MCF 10A (cell line): ENCODE measurements at regions of chr3 and their contacts with region 1.

Region 1: DNA sequence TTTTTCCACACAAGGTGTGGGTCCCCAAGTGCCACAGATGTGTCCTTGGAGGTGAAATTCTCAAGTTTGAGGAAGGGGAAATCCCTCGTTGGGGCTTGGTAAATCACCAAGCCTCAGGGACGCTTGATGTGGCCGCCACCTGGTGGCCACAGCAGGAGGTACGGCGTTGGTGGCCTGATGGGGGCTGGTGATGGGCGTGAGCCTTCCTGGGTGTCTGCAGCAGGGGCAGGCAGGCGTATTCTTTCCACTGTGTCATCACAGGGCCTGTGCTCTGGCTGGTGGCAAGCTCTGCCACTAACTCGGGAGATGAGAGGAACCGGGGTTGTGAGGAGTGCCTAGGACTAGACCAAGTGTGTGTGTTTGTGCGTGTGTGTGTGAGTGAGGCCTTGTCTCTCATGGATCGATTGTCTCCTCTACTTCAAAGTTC is 4.2 kb downstream of the ACOX2 start:
- DNase-seq: peak; percentile 79
- H3K4me3 Mint-ChIP-seq: no peak overlapping the region
- H3K27ac Mint-ChIP-seq: no peak overlapping the region
- H3K4me1 Mint-ChIP-seq: peaks cover 27% of the 10 kb centered on the region
- H3K27me3 Mint-ChIP-seq: no peaks in the 10 kb centered on the region
- CTCF ChIP-seq: peak; percentile 95

Region 2: DNA sequence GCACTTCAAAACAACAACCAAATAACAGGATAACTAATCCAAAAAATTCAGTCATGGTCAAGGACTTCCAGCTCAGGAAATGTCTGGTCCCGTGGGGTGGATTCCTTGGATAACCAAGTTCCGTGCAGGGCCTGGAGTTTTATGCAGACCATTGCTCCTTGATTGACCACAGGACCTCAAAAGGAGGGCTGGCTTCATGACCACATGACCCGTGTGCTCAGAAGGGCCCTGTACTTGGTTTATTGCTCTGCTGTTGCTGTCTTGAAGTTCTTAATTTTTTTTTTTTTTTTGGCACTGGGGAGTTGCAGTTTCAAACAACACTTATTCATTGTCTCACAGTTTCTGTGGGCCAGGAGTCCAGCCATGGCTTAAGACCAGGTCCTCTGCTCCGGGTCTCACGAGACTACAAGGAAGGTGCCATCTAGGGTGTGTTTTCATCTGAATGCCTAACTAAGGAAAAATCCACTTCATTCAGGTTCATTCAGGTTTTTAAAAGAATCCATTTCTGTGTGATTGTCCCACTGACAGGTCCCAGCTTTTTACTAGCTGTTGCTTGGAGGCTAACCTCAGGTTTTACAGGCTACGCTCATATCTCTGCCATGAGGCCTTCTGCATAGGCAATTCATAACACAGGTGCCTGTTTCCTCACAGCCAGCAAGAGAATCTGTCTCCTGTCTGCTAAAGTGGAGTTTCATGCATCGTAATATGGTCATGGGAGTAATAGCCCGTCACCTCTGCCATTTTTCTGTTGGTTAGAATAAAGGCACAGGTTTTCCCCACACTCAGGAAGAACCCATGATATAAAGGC is 459.3 kb before region 1 on chr3:
- CTCF ChIA-PET with region 1: no interaction called
- POLR2A ChIA-PET with region 1: no interaction called
- intact Hi-C with region 1: no loop called
- DNase-seq: no peak
- H3K4me3 Mint-ChIP-seq: no peak overlapping the region
- H3K27ac Mint-ChIP-seq: peak overlapping the region; percentile 54
- H3K4me1 Mint-ChIP-seq: peaks cover 19% of the 10 kb centered on the region
- H3K27me3 Mint-ChIP-seq: no peaks in the 10 kb centered on the region
- CTCF ChIP-seq: no peak

Region 3: GRCh38 chr3:58324391-58325390 is 208.1 kb before region 1 on chr3:
- CTCF ChIA-PET with region 1: interaction called, 6 read pairs
- POLR2A ChIA-PET with region 1: no interaction called
- intact Hi-C with region 1: loop called (anchors 1 kb)
- DNase-seq: no peak
- H3K4me3 Mint-ChIP-seq: no peak overlapping the region
- H3K27ac Mint-ChIP-seq: no peak overlapping the region
- H3K4me1 Mint-ChIP-seq: no peaks in the 10 kb centered on the region
- H3K27me3 Mint-ChIP-seq: no peaks in the 10 kb centered on the region
- CTCF ChIP-seq: no peak

Region 4: GRCh38 chr3:58433400-58434169 is 99.2 kb before region 1 on chr3 and contains the start of gene PDHB:
- CTCF ChIA-PET with region 1: interaction called, 3 read pairs
- POLR2A ChIA-PET with region 1: interaction called, 4 read pairs
- intact Hi-C with region 1: loop called (anchors 1 kb)
- DNase-seq: peak; percentile 87
- H3K4me3 Mint-ChIP-seq: peak within 1 kb of the TSS; percentile 93
- H3K27ac Mint-ChIP-seq: peak within 1 kb of the TSS; percentile 40
- H3K4me1 Mint-ChIP-seq: peaks cover 21% of the 10 kb centered on the region
- H3K27me3 Mint-ChIP-seq: no peaks in the 10 kb centered on the region
- CTCF ChIP-seq: no peak
- total RNA-seq, gene PDHB: 52.2 and 62.2 TPM in 2 replicates

Region 5: DNA sequence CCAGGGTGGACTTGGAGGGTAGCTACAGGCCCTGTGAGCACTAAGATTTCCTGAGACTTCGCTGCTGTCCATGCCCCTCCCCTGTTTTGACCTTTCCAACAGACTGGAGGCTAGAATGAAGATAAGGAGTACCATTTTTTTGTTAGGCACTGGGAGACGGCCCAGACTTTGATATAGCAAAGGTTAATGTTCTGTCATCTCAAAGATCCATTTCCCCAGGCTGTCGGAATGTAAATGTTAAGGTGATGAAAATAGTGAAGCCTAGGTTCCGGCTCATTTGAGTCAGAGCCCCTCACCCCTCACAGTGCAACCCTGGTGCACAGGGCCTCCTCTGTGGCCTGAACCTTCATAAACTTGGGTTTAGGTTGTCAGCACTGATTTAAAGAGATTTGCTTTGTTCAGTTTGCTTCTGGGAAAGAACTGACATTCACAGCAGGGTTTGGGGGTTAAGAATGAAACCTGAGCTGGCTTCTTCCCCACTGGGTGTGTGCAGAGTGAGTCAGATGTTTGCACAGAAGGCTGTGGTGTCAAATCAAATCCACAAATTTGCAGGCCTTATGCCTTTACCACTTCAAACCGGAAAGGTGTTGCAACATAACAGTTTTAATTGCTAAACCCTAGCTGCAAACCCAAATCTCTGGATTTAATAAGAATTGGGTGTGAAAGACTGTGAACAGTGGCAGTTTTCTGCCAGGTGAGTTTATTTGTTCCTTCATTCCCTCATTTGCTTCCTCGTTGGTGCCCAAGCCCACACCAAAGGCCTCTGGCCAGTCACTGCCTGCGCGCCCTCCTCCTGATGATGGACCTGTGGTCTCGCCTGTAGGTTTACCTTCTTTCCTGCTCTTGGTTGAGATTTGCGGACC is 61.6 kb before region 1 on chr3:
- CTCF ChIA-PET with region 1: interaction called, 20 read pairs
- POLR2A ChIA-PET with region 1: interaction called, 18 read pairs
- intact Hi-C with region 1: no loop called
- DNase-seq: peak; percentile 98
- H3K4me3 Mint-ChIP-seq: peak overlapping the region; percentile 30
- H3K27ac Mint-ChIP-seq: peak overlapping the region; percentile 82
- H3K4me1 Mint-ChIP-seq: peaks cover 13% of the 10 kb centered on the region
- H3K27me3 Mint-ChIP-seq: no peaks in the 10 kb centered on the region
- CTCF ChIP-seq: no peak

Region 6: GRCh38 chr3:58568572-58569286 is 35.9 kb after region 1 on chr3:
- CTCF ChIA-PET with region 1: interaction called, 13 read pairs
- POLR2A ChIA-PET with region 1: no interaction called
- intact Hi-C with region 1: no loop called
- DNase-seq: peak; percentile 67
- H3K4me3 Mint-ChIP-seq: no peak overlapping the region
- H3K27ac Mint-ChIP-seq: peak overlapping the region; percentile 77
- H3K4me1 Mint-ChIP-seq: peaks cover 16% of the 10 kb centered on the region
- H3K27me3 Mint-ChIP-seq: no peaks in the 10 kb centered on the region
- CTCF ChIP-seq: peak; percentile 89

Region 7: GRCh38 chr3:58691997-58692396 is 159.2 kb after region 1 on chr3:
- CTCF ChIA-PET with region 1: no interaction called
- POLR2A ChIA-PET with region 1: no interaction called
- intact Hi-C with region 1: no loop called
- DNase-seq: peak; percentile 46
- H3K4me3 Mint-ChIP-seq: no peak overlapping the region
- H3K27ac Mint-ChIP-seq: no peak overlapping the region
- H3K4me1 Mint-ChIP-seq: no peaks in the 10 kb centered on the region
- H3K27me3 Mint-ChIP-seq: peaks cover 1% of the 10 kb centered on the region
- CTCF ChIP-seq: no peak